H1 (cell line): ENCODE measurements at regions of chr1 and their contacts with region 1.

Region 1: DNA sequence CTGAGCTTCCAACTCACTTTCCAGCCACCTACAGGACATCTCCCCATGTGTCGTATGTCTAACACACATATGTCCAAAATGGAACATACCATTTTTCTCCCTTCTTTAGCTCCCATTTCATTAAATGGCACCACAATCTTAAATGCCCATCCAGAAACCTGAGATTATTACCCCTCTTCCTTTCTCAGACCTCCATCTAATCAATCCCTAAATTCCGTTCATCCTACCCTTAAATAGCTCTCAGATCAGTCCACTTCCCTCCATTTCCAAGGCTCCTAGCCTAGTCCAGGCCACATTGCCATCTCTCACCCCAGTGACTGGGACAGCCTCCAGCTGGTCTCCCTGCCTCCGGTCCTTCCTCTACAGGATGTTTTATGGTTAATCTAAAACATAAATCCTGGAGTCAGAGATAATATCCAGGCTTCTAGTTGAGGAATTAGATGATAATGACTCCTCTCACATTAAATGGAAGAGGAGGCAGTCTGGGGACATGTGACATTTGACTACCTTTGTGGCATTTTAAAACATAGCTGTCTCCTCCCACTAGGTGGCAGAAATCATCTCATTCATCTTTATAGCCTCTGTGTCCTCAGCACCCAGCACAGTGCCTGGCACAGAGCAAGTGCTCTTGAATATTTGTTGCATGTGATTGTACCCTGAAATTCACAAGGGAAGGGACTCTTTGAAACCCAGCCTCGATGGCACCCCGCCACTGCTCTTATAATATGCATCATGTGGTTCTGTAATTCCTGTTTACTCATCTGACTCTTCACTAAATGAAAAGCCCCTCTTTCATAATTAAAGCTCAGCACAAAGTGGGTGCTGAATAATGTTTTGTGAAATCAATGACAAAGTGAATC is 102.3 kb downstream of the TMEM53 start:
- DNase-seq: no peak
- H3K4me3 ChIP-seq: no peak overlapping the region
- H3K27ac ChIP-seq: no peak overlapping the region
- H3K4me1 ChIP-seq: peaks cover 4 to 6% (median 5%) of the 10 kb centered on the region in 4 experiments; a peak in 6 of 7 replicates
- H3K27me3 ChIP-seq: no peaks in the 10 kb centered on the region
- CTCF ChIP-seq: peak in 2 of 3 experiments; percentile 39 to 68; a peak in 3 of 4 replicates
- EP300 ChIP-seq: no peak
- POLR2A ChIP-seq: no peak
- RAD21 ChIP-seq: peak; percentile 18 to 49; a peak in 2 of 4 replicates

Region 2: GRCh38 chr1:44553771-44554170 is 18.2 kb before region 1 on chr1:
- CTCF ChIA-PET with region 1: interaction called, 84 read pairs
- POLR2A ChIA-PET with region 1: no interaction called
- DNase-seq: no peak
- H3K4me3 ChIP-seq: no peak overlapping the region
- H3K27ac ChIP-seq: no peak overlapping the region
- H3K4me1 ChIP-seq: peaks cover 0 to 13% (median 3%) of the 10 kb centered on the region in 4 experiments; a peak in 3 of 7 replicates
- H3K27me3 ChIP-seq: no peaks in the 10 kb centered on the region
- CTCF ChIP-seq: no peak
- EP300 ChIP-seq: no peak
- POLR2A ChIP-seq: no peak
- RAD21 ChIP-seq: no peak

Region 3: DNA sequence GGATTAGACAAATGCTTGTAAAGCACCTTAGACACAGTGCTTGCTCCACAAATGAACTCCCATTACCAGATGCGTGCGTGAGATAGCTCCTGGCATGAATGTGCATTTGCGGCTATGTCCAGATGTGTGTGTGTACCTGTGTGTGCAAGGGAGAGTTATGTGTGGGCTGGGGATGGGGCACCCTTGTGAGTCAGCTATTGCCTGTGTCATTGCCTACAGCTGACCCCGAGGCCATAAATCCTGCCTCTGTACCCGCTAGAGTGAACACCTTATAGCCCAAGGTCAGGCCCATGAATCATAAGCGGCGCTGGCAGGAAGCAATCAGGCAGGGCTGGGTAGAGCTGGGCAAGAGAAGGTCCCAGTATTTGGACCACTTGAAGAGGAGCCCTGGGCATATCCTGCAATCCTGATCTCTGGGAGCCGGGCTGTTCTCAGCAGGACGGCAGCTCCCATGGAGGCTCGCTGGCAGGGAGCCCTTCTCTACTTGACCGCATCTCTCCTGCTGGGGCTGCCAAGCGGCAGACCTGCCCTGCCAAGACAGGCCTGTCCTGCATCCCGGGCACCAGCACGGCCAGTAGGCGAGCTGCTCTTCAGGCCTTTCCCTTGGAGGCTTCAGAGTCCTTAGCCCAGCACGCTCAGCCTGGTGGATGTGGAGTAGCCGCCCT is 16.0 kb after region 1 on chr1:
- CTCF ChIA-PET with region 1: interaction called, 112 read pairs
- POLR2A ChIA-PET with region 1: interaction called, 9 read pairs
- DNase-seq: no peak
- H3K4me3 ChIP-seq: no peak overlapping the region
- H3K27ac ChIP-seq: no peak overlapping the region
- H3K4me1 ChIP-seq: peaks cover 10 to 21% (median 16%) of the 10 kb centered on the region in 4 experiments
- H3K27me3 ChIP-seq: no peaks in the 10 kb centered on the region; a peak in 1 of 7 replicates
- CTCF ChIP-seq: no peak
- EP300 ChIP-seq: no peak
- POLR2A ChIP-seq: no peak
- RAD21 ChIP-seq: no peak